ENCODE measurements at regions of chr22 and their contacts with region 1.

Region 1: DNA sequence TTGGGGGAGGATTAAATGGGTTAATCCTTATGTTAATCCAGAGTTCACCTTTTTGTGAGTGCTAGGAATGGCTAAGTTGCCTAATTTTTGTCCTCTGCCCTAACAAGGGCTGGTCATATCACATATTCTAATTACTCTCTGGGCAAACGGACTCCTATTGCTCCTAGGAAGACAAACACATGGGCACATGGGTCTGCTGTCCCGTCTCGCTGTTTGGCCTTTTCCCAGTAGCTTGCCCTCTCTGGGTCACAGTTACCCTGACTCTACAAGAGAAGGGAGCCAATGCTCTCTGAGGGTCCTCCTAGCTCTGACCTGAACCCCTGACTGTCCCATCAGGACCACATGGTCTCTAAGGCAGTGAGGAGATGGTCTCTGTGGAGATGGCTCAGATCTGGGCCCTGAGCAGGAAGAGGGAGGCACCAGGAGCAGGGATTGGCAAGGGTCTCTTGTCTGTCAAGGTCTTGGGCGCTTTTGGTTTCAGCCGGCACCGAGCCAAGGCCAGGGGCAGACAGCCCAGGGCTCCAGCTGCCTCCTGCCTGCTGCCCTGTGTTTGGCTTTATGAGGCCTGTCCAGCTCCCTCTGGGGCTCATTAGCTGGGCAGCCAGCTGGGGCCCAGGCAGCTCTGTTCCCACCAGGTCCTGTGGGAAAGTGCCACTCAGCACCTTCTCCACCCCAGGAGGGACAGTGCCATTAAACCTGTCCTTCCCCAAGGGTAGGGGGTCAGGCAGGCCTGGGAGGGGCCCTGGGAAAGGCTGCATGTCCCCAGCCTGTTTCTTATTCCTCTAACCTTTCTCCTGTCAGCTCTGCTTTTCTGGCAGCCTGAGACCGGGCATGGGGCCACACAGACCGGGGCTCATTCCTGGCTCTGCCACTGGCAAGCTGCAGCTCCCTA is 559.9 kb downstream of the MN1 start:
- DNase-seq: peak in 1 of 2 experiments; percentile 8
- H3K4me3 ChIP-seq: no peak overlapping the region
- H3K4me3 Mint-ChIP-seq: no peak overlapping the region
- H3K27ac Mint-ChIP-seq: peak overlapping the region; percentile 84
- H3K4me1 ChIP-seq: peaks cover 40% of the 10 kb centered on the region
- H3K4me1 Mint-ChIP-seq: peaks cover 23% of the 10 kb centered on the region
- H3K27me3 ChIP-seq: no peaks in the 10 kb centered on the region
- H3K27me3 Mint-ChIP-seq: no peaks in the 10 kb centered on the region
- CTCF ChIP-seq: no peak

Region 2: DNA sequence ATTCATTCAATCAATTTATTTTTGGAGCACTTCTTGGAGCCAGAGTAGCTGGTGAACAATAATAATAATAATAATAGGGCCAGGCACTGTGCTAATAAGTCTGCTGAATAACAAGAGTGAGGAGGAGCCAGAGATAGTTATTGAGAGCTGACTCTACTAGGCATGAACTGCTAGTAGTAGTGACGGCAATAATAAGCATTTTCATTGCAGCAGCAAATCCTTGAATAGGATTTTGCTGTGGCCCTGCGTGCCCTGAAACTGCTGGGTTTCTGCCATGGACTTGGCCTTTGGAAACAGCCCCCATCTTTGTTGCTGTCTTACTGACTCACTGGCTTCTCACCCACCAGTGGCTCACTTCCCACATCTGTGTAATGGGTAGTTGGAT is 38.4 kb before region 1 on chr22:
- CTCF ChIA-PET with region 1: no interaction called
- POLR2A ChIA-PET with region 1: no interaction called
- intact Hi-C with region 1: loop called (anchors 5 kb)
- DNase-seq: no peak
- H3K4me3 ChIP-seq: no peak overlapping the region
- H3K4me3 Mint-ChIP-seq: no peak overlapping the region
- H3K27ac Mint-ChIP-seq: peak overlapping the region; percentile 93
- H3K4me1 ChIP-seq: peaks cover 23% of the 10 kb centered on the region
- H3K4me1 Mint-ChIP-seq: peaks cover 10% of the 10 kb centered on the region
- H3K27me3 ChIP-seq: no peaks in the 10 kb centered on the region
- H3K27me3 Mint-ChIP-seq: no peaks in the 10 kb centered on the region
- CTCF ChIP-seq: no peak

Region 3: DNA sequence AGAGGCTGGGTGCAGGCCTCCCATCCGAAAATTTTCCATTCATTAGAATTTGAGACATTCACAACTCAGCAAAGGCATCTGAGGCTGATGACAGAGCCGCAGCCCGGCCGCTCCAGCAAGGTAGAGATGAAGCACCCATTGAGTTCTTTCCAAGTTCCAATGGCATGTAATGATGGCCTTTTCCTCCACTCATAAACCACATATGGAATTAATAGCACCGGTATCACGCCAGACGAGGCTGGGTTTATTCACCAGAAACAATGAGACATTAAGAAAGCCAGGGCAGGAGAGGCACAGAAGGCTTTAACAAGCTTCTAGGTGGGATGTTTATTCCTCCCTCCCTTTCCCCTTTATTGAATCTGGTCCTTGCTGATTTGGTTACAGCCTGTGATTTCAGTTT is 25.5 kb after region 1 on chr22:
- CTCF ChIA-PET with region 1: no interaction called
- POLR2A ChIA-PET with region 1: no interaction called
- intact Hi-C with region 1: loop called (anchors 1 kb)
- DNase-seq: no peak
- H3K4me3 ChIP-seq: no peak overlapping the region
- H3K4me3 Mint-ChIP-seq: no peak overlapping the region
- H3K27ac Mint-ChIP-seq: no peak overlapping the region
- H3K4me1 ChIP-seq: no peaks in the 10 kb centered on the region
- H3K4me1 Mint-ChIP-seq: no peaks in the 10 kb centered on the region
- H3K27me3 ChIP-seq: no peaks in the 10 kb centered on the region
- H3K27me3 Mint-ChIP-seq: peaks cover 2% of the 10 kb centered on the region
- CTCF ChIP-seq: no peak

Region 4: GRCh38 chr22:27302501-27302900 is 60.8 kb after region 1 on chr22:
- CTCF ChIA-PET with region 1: no interaction called
- POLR2A ChIA-PET with region 1: no interaction called
- intact Hi-C with region 1: loop called (anchors 2 kb)
- DNase-seq: no peak
- H3K4me3 ChIP-seq: no peak overlapping the region
- H3K4me3 Mint-ChIP-seq: no peak overlapping the region
- H3K27ac Mint-ChIP-seq: no peak overlapping the region
- H3K4me1 ChIP-seq: no peaks in the 10 kb centered on the region
- H3K4me1 Mint-ChIP-seq: no peaks in the 10 kb centered on the region
- H3K27me3 ChIP-seq: no peaks in the 10 kb centered on the region
- H3K27me3 Mint-ChIP-seq: peaks cover 4% of the 10 kb centered on the region
- CTCF ChIP-seq: no peak

Measured in Caco-2 (cell line).